ENCODE measurements at regions of chr15 and their contacts with region 1.

Region 1: DNA sequence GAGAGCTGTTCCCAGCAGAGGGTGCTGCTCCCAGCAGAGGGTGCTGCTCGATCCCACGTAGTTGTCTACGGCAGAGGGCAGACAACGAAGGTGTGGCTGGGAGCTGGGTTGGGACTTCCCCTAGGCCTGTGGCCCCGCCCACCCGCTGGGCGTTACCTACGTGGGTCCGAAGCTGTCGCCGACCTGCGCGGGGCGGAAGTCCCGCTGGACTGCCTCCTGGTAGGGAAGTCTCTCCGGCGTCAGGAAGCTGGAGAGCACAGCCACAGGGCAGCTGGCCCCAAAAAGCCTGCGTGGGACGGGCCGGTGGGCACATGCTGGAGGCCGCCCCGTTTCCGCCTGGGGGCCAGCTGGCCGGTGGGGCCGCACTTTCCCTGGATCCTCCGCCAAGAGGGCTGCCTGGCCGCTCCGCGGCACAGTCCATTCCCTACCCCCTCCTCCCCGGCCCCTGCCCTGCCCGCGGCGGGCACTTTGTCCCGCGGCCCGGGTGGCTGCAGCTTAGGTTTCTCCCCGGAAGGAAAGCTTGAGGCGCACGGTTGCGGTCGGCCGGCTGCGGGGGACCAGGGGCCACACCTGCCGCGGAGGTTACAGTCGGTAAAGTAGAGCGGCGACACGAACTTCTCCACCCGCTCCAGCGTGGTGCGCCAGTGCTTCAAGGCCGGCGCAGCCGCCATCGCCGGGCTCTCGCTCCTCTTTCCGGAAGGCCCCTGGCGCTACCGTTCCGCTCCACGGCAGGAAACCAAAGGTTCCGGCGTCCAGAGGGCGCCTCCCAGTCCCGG is at the start of gene MAN2C1:
- DNase-seq: peak; percentile 95
- ATAC-seq: peak; percentile 95
- H3K4me3 ChIP-seq: peak within 1 kb of the TSS; percentile 75
- H3K27ac ChIP-seq: peak within 1 kb of the TSS; percentile 91
- H3K4me1 ChIP-seq: peaks cover 6% of the 10 kb centered on the region
- H3K27me3 ChIP-seq: no peaks in the 10 kb centered on the region
- CTCF ChIP-seq: peak; percentile 81 to 95 (median 87)
- EP300 ChIP-seq: no peak
- POLR2A ChIP-seq: peak; percentile 97
- RAD21 ChIP-seq: peak; percentile 73
- polyA plus RNA-seq, gene MAN2C1: 1.4 to 4.6 TPM

Region 2: GRCh38 chr15:75123395-75123794 is 244.7 kb before region 1 on chr15:
- CTCF ChIA-PET with region 1: no interaction called
- POLR2A ChIA-PET with region 1: no interaction called
- RAD21 ChIA-PET with region 1: no interaction called
- SMC1A ChIA-PET with region 1: no interaction called
- in situ Hi-C with region 1: no loop called
- intact Hi-C with region 1: no loop called
- DNase-seq: no peak
- ATAC-seq: no peak
- H3K4me3 ChIP-seq: no peak overlapping the region
- H3K27ac ChIP-seq: peak overlapping the region; percentile 41
- H3K4me1 ChIP-seq: peaks cover 41% of the 10 kb centered on the region
- H3K27me3 ChIP-seq: no peaks in the 10 kb centered on the region
- CTCF ChIP-seq: no peak
- EP300 ChIP-seq: no peak
- POLR2A ChIP-seq: no peak
- RAD21 ChIP-seq: no peak

Region 3: DNA sequence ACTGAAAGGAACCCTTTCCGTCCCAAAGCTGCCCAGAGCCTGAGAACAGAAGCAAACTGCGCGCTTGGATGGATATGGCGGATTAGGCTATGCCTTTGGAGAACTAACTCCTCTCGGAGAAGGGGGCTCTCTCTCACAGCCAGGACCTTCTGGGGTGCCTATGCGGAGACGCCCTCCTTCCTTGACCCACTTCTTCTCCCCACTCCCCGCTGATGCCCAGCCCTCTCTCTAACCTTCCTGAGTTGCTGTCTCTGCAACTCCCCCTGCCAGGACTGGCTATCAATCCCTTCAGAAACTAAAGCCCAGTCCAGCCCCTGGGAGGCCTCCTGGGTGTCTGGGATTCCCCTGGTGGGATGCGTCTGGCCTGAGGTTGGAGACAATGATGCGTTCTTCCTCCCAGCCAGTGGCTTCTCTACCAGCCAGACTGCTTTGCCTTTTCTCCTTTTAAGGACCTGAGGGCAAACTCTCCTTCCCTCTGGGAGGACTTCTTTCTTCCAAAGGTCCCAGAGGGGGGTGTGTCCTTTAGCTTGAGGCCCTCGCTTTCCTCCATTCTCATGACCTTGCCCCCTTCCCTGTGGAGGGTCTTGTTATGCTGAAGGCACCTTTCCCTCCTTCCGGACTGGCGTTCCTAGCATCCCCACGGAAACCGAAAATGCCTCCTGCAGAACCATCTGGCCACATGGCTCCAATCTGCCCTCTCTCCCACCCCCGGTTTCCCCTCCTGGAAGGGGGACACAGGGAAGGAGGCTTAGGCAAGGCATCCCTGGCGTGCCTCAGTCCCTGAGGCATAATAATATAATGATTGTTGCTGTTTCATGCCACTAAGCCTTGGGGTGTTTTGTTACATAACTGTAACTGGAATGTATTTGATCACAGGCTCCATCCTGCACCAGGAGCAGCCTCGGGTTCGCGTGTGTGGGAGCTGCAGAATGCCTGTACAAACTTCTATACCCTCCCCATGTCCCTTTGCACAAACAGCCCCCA is 229.8 kb before region 1 on chr15:
- CTCF ChIA-PET with region 1: no interaction called
- POLR2A ChIA-PET with region 1: no interaction called
- RAD21 ChIA-PET with region 1: no interaction called
- SMC1A ChIA-PET with region 1: no interaction called
- in situ Hi-C with region 1: no loop called
- intact Hi-C with region 1: no loop called
- DNase-seq: no peak
- ATAC-seq: peak; percentile 21; the same call in 1 of the 3 replicates
- H3K4me3 ChIP-seq: no peak overlapping the region
- H3K27ac ChIP-seq: no peak overlapping the region
- H3K4me1 ChIP-seq: peaks cover 40% of the 10 kb centered on the region
- H3K27me3 ChIP-seq: no peaks in the 10 kb centered on the region
- CTCF ChIP-seq: no peak
- EP300 ChIP-seq: no peak
- POLR2A ChIP-seq: no peak
- RAD21 ChIP-seq: no peak

Region 4: DNA sequence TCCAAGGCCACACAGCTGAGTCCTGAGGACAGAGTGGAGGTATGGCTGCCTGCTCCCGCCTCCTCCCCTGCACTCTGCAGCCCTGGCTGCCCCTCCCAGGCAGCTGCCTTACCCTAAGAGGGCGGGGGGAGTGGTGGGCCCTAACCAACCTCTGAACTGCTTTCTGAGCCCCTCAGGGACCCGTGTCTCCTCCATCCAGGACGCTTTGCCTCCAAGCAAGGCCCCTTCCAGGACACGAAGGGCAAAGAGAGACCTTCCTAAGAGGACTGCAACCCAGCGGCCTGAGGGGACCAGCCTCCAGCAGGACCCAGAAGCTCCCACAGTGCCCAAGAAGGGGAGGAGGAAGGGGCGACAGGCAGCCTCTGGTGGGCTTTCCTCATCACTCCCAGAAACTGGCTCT is 13.6 kb before region 1 on chr15:
- CTCF ChIA-PET with region 1: interaction called, 12 read pairs
- POLR2A ChIA-PET with region 1: interaction called, 3 read pairs
- RAD21 ChIA-PET with region 1: no interaction called
- SMC1A ChIA-PET with region 1: interaction called, 4 read pairs
- in situ Hi-C with region 1: no loop called
- intact Hi-C with region 1: no loop called
- DNase-seq: no peak
- ATAC-seq: no peak
- H3K4me3 ChIP-seq: no peak overlapping the region
- H3K27ac ChIP-seq: no peak overlapping the region
- H3K4me1 ChIP-seq: peaks cover 6% of the 10 kb centered on the region
- H3K27me3 ChIP-seq: no peaks in the 10 kb centered on the region
- CTCF ChIP-seq: no peak
- EP300 ChIP-seq: no peak
- POLR2A ChIP-seq: no peak
- RAD21 ChIP-seq: no peak

Region 5: GRCh38 chr15:75446151-75446550 is 78.0 kb after region 1 on chr15:
- CTCF ChIA-PET with region 1: interaction called, 63 read pairs
- POLR2A ChIA-PET with region 1: interaction called, 43 read pairs
- RAD21 ChIA-PET with region 1: interaction called, 113 read pairs
- SMC1A ChIA-PET with region 1: interaction called, 19 read pairs
- in situ Hi-C with region 1: no loop called
- intact Hi-C with region 1: loop called (anchors 2 kb)
- DNase-seq: peak; percentile 11
- ATAC-seq: no peak
- H3K4me3 ChIP-seq: peak overlapping the region; percentile 13; the same call in 1 of the 2 replicates
- H3K27ac ChIP-seq: peak overlapping the region; percentile 23
- H3K4me1 ChIP-seq: peaks cover 25% of the 10 kb centered on the region
- H3K27me3 ChIP-seq: no peaks in the 10 kb centered on the region
- CTCF ChIP-seq: no peak
- EP300 ChIP-seq: no peak
- POLR2A ChIP-seq: no peak
- RAD21 ChIP-seq: no peak

Region 6: DNA sequence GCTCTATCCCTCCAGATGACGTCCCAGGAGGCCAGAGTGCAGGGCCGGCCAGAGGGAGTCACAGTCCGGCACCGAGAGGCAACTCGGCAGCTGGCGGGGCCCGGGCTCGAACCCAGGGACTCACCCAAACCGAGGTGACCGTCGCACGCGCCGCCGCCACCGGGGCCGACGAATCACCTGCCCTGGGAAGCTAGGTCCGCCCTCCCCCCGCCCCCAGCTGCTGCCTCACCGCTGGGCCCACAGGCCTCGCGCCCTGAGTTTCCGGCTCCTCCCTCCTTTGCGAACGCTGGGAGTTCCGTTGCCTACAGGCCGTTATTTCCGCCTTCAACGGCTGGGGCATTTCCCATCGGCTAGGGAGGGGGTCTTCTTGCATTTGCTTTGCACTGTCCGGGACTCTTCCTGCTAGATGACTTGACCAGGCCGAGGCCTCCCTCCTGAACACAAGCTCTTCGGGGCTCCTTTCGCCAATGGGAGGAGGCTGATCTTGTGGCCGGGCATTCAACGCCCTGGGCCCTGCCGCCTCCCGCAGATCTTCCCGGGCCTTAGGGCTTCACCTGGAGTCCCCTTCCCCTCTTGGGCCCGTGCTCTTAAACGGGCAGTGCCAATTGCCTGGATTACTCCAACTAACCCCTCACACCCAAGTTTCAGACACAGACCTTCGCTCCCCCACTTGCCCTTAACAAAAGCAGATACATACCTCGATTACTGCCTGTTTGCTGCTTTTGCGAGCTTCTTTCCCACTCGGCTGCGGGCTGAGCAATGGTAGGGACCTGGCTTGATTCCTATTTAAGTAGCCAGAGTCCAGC is 257.6 kb after region 1 on chr15 and contains the start of gene SNUPN:
- CTCF ChIA-PET with region 1: interaction called, 15 read pairs
- POLR2A ChIA-PET with region 1: interaction called, 19 read pairs
- RAD21 ChIA-PET with region 1: interaction called, 24 read pairs
- SMC1A ChIA-PET with region 1: interaction called, 3 read pairs
- in situ Hi-C with region 1: no loop called
- intact Hi-C with region 1: no loop called
- DNase-seq: peak; percentile 87
- ATAC-seq: peak; percentile 91
- H3K4me3 ChIP-seq: peak within 1 kb of the TSS; percentile 81
- H3K27ac ChIP-seq: peak within 1 kb of the TSS; percentile 98
- H3K4me1 ChIP-seq: peaks cover 6% of the 10 kb centered on the region
- H3K27me3 ChIP-seq: no peaks in the 10 kb centered on the region
- CTCF ChIP-seq: no peak
- EP300 ChIP-seq: 0 out of 4 replicates have a peak, but pooled peaks of 1 of the 2 experiments have one; percentile 37
- POLR2A ChIP-seq: peak; percentile 87
- RAD21 ChIP-seq: no peak
- polyA plus RNA-seq, gene SNUPN: 47.3 to 50.3 TPM

Region 7: DNA sequence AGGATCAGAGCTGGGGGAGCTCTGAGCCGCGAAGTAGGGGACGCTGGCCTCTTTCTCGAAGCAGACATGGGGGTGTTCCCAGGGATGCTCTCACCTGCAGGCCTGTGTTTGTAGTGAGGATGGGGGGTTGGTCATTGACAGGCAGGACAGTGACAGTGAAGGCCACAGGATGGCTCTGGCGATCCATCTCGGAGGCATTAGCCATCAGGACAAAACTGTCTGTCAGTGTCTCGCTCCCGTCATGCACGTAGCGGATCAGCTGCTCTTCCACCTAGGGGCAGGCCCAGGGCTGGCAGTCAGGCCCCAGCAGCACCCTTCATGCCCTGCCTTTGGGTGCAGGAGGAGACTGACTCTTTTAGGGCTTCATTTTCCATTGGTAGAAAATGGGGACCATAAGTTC is 316.5 kb after region 1 on chr15:
- CTCF ChIA-PET with region 1: interaction called, 58 read pairs
- POLR2A ChIA-PET with region 1: interaction called, 3 read pairs
- RAD21 ChIA-PET with region 1: interaction called, 10 read pairs
- SMC1A ChIA-PET with region 1: interaction called, 5 read pairs
- in situ Hi-C with region 1: no loop called
- intact Hi-C with region 1: loop called (anchors 1 kb)
- DNase-seq: no peak
- ATAC-seq: no peak
- H3K4me3 ChIP-seq: no peak overlapping the region
- H3K27ac ChIP-seq: no peak overlapping the region
- H3K4me1 ChIP-seq: no peaks in the 10 kb centered on the region
- H3K27me3 ChIP-seq: no peaks in the 10 kb centered on the region
- CTCF ChIP-seq: no peak
- EP300 ChIP-seq: no peak
- POLR2A ChIP-seq: no peak
- RAD21 ChIP-seq: no peak

Region 8: GRCh38 chr15:76185716-76186115 is 817.6 kb after region 1 on chr15:
- CTCF ChIA-PET with region 1: no interaction called
- POLR2A ChIA-PET with region 1: no interaction called
- RAD21 ChIA-PET with region 1: no interaction called
- SMC1A ChIA-PET with region 1: no interaction called
- in situ Hi-C with region 1: no loop called
- intact Hi-C with region 1: no loop called
- DNase-seq: no peak
- ATAC-seq: peak; percentile 61
- H3K4me3 ChIP-seq: no peak overlapping the region
- H3K27ac ChIP-seq: no peak overlapping the region
- H3K4me1 ChIP-seq: peaks cover 18% of the 10 kb centered on the region
- H3K27me3 ChIP-seq: peaks cover 0 to 1% of the 10 kb centered on the region in 2 experiments; a peak in 2 of 4 replicates
- CTCF ChIP-seq: peak; percentile 56 to 70 (median 59)
- EP300 ChIP-seq: no peak
- POLR2A ChIP-seq: no peak
- RAD21 ChIP-seq: peak; percentile 51; the same call in 1 of the 2 replicates